Ovary (tissue), 10 donors: ENCODE measurements at regions of chr1 and their contacts with region 1.

Region 1: GRCh38 chr1:110390692-110391245 is at the start of gene SLC16A4:
- DNase-seq: peak in 4 of 5 donors; percentile 35 to 51 (median 44)
- H3K4me3 ChIP-seq: peak within 1 kb of the TSS; percentile 28
- H3K27ac ChIP-seq: peak within 1 kb of the TSS; percentile 11 to 68
- H3K4me1 ChIP-seq: peaks cover 10% of the 10 kb centered on the region
- H3K27me3 ChIP-seq: no peaks in the 10 kb centered on the region
- CTCF ChIP-seq: no peak
- EP300 ChIP-seq: no peak
- POLR2A ChIP-seq: peak; percentile 17
- total RNA-seq, gene SLC16A4: 14.5 to 33.7 (median 21.2) TPM

Region 2: DNA sequence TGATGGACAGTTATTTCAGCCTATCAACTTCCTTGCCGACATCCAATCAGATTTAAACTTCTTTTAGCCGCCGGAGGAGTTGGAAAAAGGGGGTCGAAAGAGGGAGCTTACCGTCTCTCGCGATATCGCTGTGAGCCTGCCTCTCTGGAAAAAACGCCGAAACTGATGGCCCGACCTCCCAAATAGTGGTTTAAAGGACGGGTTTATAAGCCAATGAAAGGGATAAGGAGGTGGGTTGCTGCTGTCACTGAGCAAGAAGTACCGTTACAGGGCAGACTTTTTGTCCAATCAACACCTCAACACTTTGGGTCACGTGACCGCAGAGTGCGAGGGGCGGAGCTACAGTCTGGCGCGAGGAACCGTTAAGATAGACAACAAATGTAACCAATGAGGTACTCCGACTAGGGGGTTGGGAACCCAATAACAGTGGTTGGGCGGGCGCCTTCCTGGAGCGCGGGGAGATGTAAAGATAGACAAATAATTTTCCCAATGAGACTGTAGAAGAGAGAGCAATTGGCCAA is 51.8 kb before region 1 on chr1 and contains the start of gene RBM15:
- intact Hi-C with region 1: loop called in 2 of 4 experiments (anchors 2 to 10 kb)
- DNase-seq: peak; percentile 97 to 99 (median 98)
- H3K4me3 ChIP-seq: peak within 1 kb of the TSS; percentile 96
- H3K27ac ChIP-seq: peak within 1 kb of the TSS; percentile 96 to 98
- H3K4me1 ChIP-seq: peaks cover 13% of the 10 kb centered on the region
- H3K27me3 ChIP-seq: no peaks in the 10 kb centered on the region
- CTCF ChIP-seq: no peak
- EP300 ChIP-seq: no peak
- POLR2A ChIP-seq: no peak
- total RNA-seq, gene RBM15: 21.2 to 28.7 (median 26.2) TPM